Activated CD4-positive, alpha-beta memory T cell treated with anti-CD3 and anti-CD28 coated beads for 36 hours (primary cell): ENCODE measurements at regions of chr6 and their contacts with region 1.

Region 1: GRCh38 chr6:43477235-43478007 is at the start of gene TJAP1:
- DNase-seq: peak; percentile 98
- H3K4me3 Mint-ChIP-seq: peak within 1 kb of the TSS; percentile 92
- H3K27ac Mint-ChIP-seq: peak within 1 kb of the TSS; percentile 87
- H3K4me1 Mint-ChIP-seq: peaks cover 48% of the 10 kb centered on the region
- H3K27me3 Mint-ChIP-seq: no peaks in the 10 kb centered on the region
- total RNA-seq, gene TJAP1: 30.5 to 36.2 TPM

Region 2: GRCh38 chr6:43369174-43370022 is 108.0 kb before region 1 on chr6 and contains the start of gene ZNF318:
- CTCF ChIA-PET with region 1: no interaction called
- POLR2A ChIA-PET with region 1: no interaction called
- intact Hi-C with region 1: loop called (anchors 1 kb)
- DNase-seq: peak; percentile 96
- H3K4me3 Mint-ChIP-seq: peak within 1 kb of the TSS; percentile 85
- H3K27ac Mint-ChIP-seq: peak within 1 kb of the TSS; percentile 91
- H3K4me1 Mint-ChIP-seq: peaks cover 30% of the 10 kb centered on the region
- H3K27me3 Mint-ChIP-seq: no peaks in the 10 kb centered on the region
- total RNA-seq, gene ZNF318: 12.1 to 12.7 TPM

Region 3: GRCh38 chr6:43386492-43386891 is 90.9 kb before region 1 on chr6:
- CTCF ChIA-PET with region 1: no interaction called
- POLR2A ChIA-PET with region 1: no interaction called
- intact Hi-C with region 1: loop called (anchors 5 kb)
- DNase-seq: no peak
- H3K4me3 Mint-ChIP-seq: no peak overlapping the region
- H3K27ac Mint-ChIP-seq: no peak overlapping the region
- H3K4me1 Mint-ChIP-seq: peaks cover 55% of the 10 kb centered on the region
- H3K27me3 Mint-ChIP-seq: no peaks in the 10 kb centered on the region

Region 4: DNA sequence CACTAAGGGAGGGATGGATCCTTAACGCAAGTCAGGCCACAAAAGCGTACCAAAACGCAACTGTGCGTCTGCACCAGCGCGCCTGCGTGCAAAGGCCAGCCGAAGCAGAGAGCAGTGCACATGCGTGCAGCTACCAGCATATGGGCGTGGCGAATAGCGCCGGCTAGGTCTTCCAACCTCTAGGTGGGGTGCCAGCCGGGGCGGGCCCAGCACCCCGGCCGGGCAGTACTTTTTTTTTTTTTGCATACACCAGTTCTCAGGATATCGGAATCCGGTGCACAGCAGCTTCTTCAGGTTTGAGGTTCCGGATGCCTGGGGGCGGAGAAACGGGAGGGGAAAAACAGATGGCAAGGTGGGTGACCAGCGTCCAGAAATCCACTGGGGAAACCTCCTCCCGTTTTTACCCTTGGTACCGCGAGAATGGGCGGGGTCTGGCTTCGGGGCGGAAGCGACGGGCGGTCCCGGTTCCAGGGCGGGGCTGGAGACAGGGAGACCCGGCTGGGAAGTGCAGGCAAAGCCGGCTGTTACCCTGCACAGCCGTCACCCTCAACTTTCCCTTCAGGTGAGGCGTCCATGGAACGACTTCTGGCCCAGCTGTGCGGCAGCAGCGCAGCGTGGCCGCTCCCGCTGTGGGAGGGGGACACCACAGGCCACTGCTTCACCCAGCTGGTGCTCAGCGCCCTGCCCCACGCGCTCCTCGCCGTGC is 49.9 kb before region 1 on chr6 and contains the start of gene ABCC10:
- CTCF ChIA-PET with region 1: no interaction called
- POLR2A ChIA-PET with region 1: no interaction called
- intact Hi-C with region 1: no loop called
- DNase-seq: peak; percentile 97
- H3K4me3 Mint-ChIP-seq: peak within 1 kb of the TSS; percentile 95
- H3K27ac Mint-ChIP-seq: peak within 1 kb of the TSS; percentile 96
- H3K4me1 Mint-ChIP-seq: peaks cover 17% of the 10 kb centered on the region
- H3K27me3 Mint-ChIP-seq: no peaks in the 10 kb centered on the region
- total RNA-seq, gene ABCC10: 27.2 to 31.9 TPM

Region 5: DNA sequence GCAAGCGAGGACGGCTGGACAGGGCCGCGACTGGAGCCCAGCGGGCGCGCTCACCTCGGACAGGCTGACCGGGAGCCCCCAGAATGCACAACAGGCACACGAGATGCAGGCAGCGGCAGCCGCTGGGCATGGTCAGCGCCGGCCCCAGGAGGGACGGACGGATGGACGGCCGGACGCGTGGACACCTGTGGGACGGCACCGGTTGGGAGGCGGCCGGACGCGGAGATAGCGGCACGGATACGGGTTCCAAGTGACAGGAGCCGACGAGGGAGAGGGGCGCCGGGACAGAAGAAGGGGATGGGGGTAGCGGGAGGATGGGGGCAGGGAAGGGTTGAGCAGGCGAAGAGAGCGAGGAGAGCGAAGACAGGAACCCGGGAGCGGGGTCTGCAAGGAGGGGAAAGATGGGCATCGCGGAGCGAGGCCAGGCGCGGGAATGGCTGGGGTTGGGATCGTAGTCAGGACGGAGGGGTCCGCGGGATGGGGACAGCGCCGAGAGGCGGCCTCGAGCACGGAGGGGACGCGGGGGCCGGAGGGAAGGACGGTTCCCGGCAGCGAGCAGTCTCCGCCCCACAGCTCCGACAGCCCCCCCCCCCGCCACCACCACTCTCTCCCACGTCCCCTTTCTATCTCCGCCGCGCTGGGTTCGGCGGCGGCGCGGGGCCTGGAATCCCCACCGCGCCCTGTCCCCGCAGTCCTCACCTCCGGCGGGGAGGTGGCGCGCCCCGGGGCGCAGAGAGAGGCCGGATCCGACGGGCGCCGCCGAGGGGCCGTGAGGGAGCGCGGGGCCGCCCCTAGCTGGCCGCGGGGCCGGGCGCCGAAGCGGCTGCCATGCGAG is 22.5 kb before region 1 on chr6:
- CTCF ChIA-PET with region 1: interaction called, 3 read pairs
- POLR2A ChIA-PET with region 1: interaction called, 3 read pairs
- intact Hi-C with region 1: loop called (anchors 2 kb)
- DNase-seq: peak; percentile 36
- H3K4me3 Mint-ChIP-seq: peak overlapping the region; percentile 76
- H3K27ac Mint-ChIP-seq: no peak overlapping the region
- H3K4me1 Mint-ChIP-seq: peaks cover 8% of the 10 kb centered on the region
- H3K27me3 Mint-ChIP-seq: peaks cover 9% of the 10 kb centered on the region

Region 6: DNA sequence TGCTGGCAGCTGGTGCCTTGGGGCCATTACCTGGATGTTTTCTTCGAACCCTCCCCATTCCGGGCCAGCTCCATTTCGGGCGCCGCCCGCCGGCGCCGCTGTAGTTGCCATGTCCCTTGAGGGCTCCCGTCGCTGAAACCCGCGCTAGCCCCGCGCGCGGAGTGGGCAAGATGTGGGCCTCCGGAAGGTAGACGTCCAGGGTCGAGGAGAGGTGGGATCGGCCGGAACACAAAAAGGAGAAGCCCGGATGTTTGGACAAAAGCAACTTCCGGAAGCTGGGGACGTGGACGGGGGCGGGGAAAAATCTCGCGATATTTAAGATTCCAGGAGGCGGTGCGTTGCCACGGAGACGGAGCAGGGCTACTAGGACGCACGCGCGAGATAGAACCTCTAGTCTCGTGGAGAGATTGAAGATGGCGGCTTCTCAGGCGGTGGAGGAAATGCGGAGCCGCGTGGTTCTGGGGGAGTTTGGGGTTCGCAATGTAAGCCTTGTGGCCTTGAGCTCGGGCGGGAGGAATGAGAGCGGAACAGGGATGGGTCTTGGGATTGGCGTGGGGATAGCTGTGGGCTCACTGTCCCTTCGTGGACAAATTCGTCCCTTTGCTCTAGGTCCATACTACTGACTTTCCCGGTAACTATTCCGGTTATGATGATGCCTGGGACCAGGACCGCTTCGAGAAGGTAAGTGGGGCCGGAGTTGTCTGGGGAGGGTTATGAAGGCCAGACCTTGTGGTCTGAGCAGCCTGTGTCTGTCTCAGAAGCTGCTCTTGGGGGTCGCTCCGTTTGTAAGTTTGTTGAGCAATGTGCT is 39.5 kb after region 1 on chr6 and contains the starts of genes POLR1C and YIPF3:
- CTCF ChIA-PET with region 1: no interaction called
- POLR2A ChIA-PET with region 1: interaction called, 6 read pairs
- intact Hi-C with region 1: loop called (anchors 2 kb)
- DNase-seq: peak; percentile 99
- H3K4me3 Mint-ChIP-seq: no peak within 1 kb of the TSS
- H3K27ac Mint-ChIP-seq: no peak within 1 kb of the TSS
- H3K4me1 Mint-ChIP-seq: peaks cover 25% of the 10 kb centered on the region
- H3K27me3 Mint-ChIP-seq: no peaks in the 10 kb centered on the region
- total RNA-seq, gene POLR1C: 46.8 to 49.5 TPM
- total RNA-seq, gene YIPF3: 38.3 to 39.3 TPM

Region 7: DNA sequence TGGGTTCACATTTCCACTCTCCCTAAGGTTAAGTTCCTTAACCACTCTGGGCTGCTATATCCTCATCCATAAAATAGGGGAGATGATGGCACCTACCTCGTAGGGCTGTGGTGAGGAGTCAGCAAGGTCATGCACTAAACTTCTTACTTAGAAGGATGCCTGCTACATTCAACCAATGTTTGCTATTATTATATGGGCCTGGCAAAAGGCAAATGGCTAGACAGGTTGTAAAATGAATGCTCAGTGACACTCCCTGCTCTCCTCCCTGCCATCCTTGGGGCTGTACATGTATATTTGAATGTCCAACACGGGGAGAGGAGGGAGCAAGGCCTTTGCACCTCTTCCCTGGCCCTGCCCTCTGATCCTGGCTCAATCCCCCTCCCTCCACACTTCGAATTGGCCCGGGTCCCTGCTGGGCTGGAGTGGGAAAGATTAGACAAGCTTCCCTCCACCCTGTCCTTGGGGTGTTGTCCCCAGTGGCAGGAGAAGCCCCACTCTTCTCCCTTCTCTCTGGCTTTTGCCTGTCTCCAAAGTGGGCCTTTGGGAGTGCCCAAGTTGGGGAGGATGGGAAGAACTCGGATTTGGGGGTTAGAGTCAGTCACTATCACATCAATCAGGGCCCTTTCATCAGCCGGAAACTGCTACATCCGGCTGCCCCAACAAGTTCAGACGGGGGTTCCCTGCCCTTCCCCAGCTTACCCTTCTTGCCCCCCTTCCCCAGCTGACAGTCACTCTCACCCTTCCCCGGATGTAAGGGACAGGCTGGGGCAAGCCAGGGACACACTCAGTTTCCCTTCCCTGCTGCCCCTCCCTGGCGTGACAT is 256.3 kb after region 1 on chr6:
- CTCF ChIA-PET with region 1: no interaction called
- POLR2A ChIA-PET with region 1: no interaction called
- intact Hi-C with region 1: no loop called
- DNase-seq: peak; percentile 70
- H3K4me3 Mint-ChIP-seq: no peak overlapping the region
- H3K27ac Mint-ChIP-seq: peak overlapping the region; percentile 67
- H3K4me1 Mint-ChIP-seq: peaks cover 13% of the 10 kb centered on the region
- H3K27me3 Mint-ChIP-seq: no peaks in the 10 kb centered on the region